CD4-positive, alpha-beta memory T cell (primary cell): ENCODE measurements at regions of chr17 and their contacts with region 1.

Region 1: DNA sequence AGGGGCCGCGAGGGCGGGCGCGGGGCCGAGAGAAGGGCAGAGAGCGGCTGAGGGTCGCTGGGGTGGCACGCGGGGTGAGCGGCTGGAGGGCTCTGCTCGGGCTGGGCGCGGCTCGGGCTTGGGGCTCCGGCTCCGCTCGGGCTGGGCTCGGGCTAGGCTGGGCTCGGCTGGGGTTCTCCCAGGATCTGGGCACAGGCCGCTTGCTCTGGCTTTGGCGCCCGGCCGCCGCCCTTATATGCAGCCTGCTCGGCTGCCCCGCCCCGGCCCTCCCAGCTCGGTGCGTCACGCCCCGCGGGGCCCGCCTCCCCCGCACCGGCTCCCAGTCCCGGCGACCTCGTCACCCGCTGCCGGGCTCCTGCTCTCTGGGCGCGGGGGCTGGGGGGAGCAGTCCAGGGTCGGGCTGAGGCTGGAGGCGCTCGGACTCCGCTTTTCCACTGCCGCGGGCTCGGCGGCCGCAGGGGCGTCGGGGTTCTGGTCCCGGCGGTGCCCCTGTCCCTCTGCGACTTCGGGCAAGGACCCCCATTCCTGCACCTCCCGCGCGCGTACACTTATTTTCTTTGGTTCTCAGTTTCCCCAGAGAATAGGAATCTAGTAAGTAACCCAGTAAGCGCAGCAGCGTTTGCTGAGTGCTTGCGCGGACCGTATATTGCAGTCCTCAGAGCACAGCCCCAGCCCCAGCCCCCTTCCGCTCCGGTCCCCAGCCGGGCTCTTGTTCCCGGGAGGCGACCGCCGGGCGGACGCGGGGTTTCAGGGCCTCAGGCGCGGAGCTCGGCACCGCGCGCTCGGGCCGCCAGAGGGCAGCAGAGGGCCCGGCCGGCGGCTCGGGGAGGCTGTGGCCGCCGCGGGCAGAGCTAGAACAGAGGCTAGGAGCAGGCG is at the start of gene RASD1:
- DNase-seq: peak; percentile 74 to 83 (median 76)
- H3K4me3 ChIP-seq: peak within 1 kb of the TSS in 1 of 2 donors; percentile 67
- H3K4me3 Mint-ChIP-seq: peak within 1 kb of the TSS; percentile 80 to 94 (median 88)
- H3K27ac ChIP-seq: peak within 1 kb of the TSS; percentile 43
- H3K27ac Mint-ChIP-seq: peak within 1 kb of the TSS in 5 of 7 donors; percentile 46 to 82 (median 56)
- H3K4me1 ChIP-seq: peaks cover 19% of the 10 kb centered on the region
- H3K4me1 Mint-ChIP-seq: peaks cover 3 to 22% (median 9%) of the 10 kb centered on the region in 4 donors
- H3K27me3 ChIP-seq: no peaks in the 10 kb centered on the region
- H3K27me3 Mint-ChIP-seq: peaks cover 0 to 1% of the 10 kb centered on the region in 2 donors
- total RNA-seq, gene RASD1: 0.86 to 0.87 TPM

Region 2: GRCh38 chr17:17356149-17356930 is 140.1 kb before region 1 on chr17:
- CTCF ChIA-PET with region 1: interaction called, 22 read pairs
- POLR2A ChIA-PET with region 1: no interaction called
- intact Hi-C with region 1: loop called (anchors 1 kb)
- DNase-seq: peak; percentile 59 to 65 (median 64)
- H3K4me3 ChIP-seq: no peak overlapping the region
- H3K4me3 Mint-ChIP-seq: no peak overlapping the region
- H3K27ac ChIP-seq: no peak overlapping the region
- H3K27ac Mint-ChIP-seq: peak overlapping the region in 1 of 7 donors; percentile 46
- H3K4me1 ChIP-seq: no peaks in the 10 kb centered on the region
- H3K4me1 Mint-ChIP-seq: peaks cover 0 to 7% (median 1%) of the 10 kb centered on the region in 4 donors
- H3K27me3 ChIP-seq: no peaks in the 10 kb centered on the region
- H3K27me3 Mint-ChIP-seq: peaks cover 1 to 4% of the 10 kb centered on the region in 2 donors

Region 3: GRCh38 chr17:17460045-17460444 is 36.4 kb before region 1 on chr17:
- CTCF ChIA-PET with region 1: no interaction called
- POLR2A ChIA-PET with region 1: no interaction called
- intact Hi-C with region 1: no loop called
- DNase-seq: no peak
- H3K4me3 ChIP-seq: no peak overlapping the region
- H3K4me3 Mint-ChIP-seq: no peak overlapping the region
- H3K27ac ChIP-seq: no peak overlapping the region
- H3K27ac Mint-ChIP-seq: no peak overlapping the region
- H3K4me1 ChIP-seq: no peaks in the 10 kb centered on the region
- H3K4me1 Mint-ChIP-seq: peaks cover 0 to 4% (median 1%) of the 10 kb centered on the region in 4 donors
- H3K27me3 ChIP-seq: no peaks in the 10 kb centered on the region
- H3K27me3 Mint-ChIP-seq: peaks cover 10 to 13% of the 10 kb centered on the region in 2 donors

Region 4: GRCh38 chr17:17511881-17512858 is 15.7 kb after region 1 on chr17:
- CTCF ChIA-PET with region 1: interaction called, 13 read pairs
- POLR2A ChIA-PET with region 1: no interaction called
- intact Hi-C with region 1: no loop called
- DNase-seq: no peak
- H3K4me3 ChIP-seq: no peak overlapping the region
- H3K4me3 Mint-ChIP-seq: no peak overlapping the region
- H3K27ac ChIP-seq: no peak overlapping the region
- H3K27ac Mint-ChIP-seq: no peak overlapping the region
- H3K4me1 ChIP-seq: no peaks in the 10 kb centered on the region
- H3K4me1 Mint-ChIP-seq: peaks cover 0 to 10% (median 2%) of the 10 kb centered on the region in 4 donors
- H3K27me3 ChIP-seq: no peaks in the 10 kb centered on the region
- H3K27me3 Mint-ChIP-seq: no peaks in the 10 kb centered on the region

Region 5: DNA sequence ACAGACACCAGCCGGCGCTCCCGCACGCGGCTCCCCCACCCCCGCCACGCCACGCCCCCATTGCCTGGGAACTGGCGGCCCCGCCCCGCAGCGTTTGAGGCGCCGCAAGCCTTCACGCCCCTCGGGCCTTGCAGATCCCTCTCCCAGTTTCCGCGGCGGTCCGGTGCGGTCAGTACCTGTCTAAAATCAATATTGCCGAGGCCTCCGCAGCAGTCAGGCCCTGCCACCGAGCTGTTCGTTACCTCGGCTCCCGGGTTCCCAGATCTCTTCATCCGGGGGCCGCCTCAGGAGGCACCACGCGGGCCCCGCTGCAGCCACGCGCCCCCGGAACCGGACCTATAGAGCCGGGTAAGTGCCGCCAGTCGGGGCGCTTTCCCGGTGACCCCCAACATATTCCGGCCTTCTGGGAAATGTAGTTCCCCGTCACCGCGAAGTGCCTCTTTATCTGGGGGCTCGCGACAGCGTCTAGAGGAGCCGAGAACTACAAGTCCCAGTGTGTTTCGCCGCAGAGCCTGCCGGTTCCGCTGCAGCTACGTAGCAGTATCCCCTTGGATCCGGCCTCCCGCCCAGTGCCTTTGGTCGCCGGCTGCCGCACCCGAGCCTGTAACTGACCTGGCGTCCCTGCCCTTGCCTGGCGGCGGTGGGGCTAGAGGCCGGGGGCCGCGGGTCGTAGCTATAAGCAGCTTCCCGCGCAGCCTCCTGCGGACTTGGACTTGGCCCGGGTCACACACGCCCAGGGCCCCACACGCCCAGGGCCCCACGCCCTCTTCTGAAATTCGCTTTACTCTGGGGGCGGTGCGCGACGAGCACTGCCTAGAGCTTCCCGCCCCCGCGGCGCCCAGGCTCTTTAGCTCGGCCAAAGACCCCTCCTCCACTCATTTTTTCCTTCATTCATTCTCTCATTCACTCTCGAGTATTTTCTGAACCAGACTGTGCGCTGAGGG is 95.2 kb after region 1 on chr17 and contains the start of gene PEMT:
- CTCF ChIA-PET with region 1: interaction called, 7 read pairs
- POLR2A ChIA-PET with region 1: interaction called, 11 read pairs
- intact Hi-C with region 1: loop called (anchors 1 kb)
- DNase-seq: peak; percentile 94 to 97 (median 94)
- H3K4me3 ChIP-seq: peak within 1 kb of the TSS; percentile 86 to 99
- H3K4me3 Mint-ChIP-seq: peak within 1 kb of the TSS; percentile 93 to 97 (median 95)
- H3K27ac ChIP-seq: peak within 1 kb of the TSS; percentile 73
- H3K27ac Mint-ChIP-seq: peak within 1 kb of the TSS; percentile 84 to 99 (median 96)
- H3K4me1 ChIP-seq: peaks cover 21% of the 10 kb centered on the region
- H3K4me1 Mint-ChIP-seq: peaks cover 11 to 29% (median 18%) of the 10 kb centered on the region in 4 donors
- H3K27me3 ChIP-seq: no peaks in the 10 kb centered on the region
- H3K27me3 Mint-ChIP-seq: no peaks in the 10 kb centered on the region
- total RNA-seq, gene PEMT: 11.6 to 13.8 TPM

Region 6: GRCh38 chr17:17636272-17636885 is 140.0 kb after region 1 on chr17:
- CTCF ChIA-PET with region 1: interaction called, 62 read pairs
- POLR2A ChIA-PET with region 1: interaction called, 6 read pairs
- intact Hi-C with region 1: no loop called
- DNase-seq: no peak
- H3K4me3 ChIP-seq: no peak overlapping the region
- H3K4me3 Mint-ChIP-seq: no peak overlapping the region
- H3K27ac ChIP-seq: no peak overlapping the region
- H3K27ac Mint-ChIP-seq: peak overlapping the region in 1 of 7 donors; percentile 49
- H3K4me1 ChIP-seq: no peaks in the 10 kb centered on the region
- H3K4me1 Mint-ChIP-seq: peaks cover 0 to 1% (median 0%) of the 10 kb centered on the region in 4 donors
- H3K27me3 ChIP-seq: no peaks in the 10 kb centered on the region
- H3K27me3 Mint-ChIP-seq: peaks cover 0 to 3% of the 10 kb centered on the region in 2 donors